ENCODE measurements at regions of chr6 and their contacts with region 1.

Region 1: GRCh38 chr6:63764318-63764916 is 128.8 kb downstream of the PHF3 start:
- DNase-seq: no peak
- H3K4me3 ChIP-seq: no peak overlapping the region
- H3K27ac ChIP-seq: no peak overlapping the region
- H3K4me1 ChIP-seq: no peaks in the 10 kb centered on the region
- H3K27me3 ChIP-seq: no peaks in the 10 kb centered on the region
- CTCF ChIP-seq: peak; percentile 11 to 77 (median 58)
- POLR2A ChIP-seq: no peak

Region 2: DNA sequence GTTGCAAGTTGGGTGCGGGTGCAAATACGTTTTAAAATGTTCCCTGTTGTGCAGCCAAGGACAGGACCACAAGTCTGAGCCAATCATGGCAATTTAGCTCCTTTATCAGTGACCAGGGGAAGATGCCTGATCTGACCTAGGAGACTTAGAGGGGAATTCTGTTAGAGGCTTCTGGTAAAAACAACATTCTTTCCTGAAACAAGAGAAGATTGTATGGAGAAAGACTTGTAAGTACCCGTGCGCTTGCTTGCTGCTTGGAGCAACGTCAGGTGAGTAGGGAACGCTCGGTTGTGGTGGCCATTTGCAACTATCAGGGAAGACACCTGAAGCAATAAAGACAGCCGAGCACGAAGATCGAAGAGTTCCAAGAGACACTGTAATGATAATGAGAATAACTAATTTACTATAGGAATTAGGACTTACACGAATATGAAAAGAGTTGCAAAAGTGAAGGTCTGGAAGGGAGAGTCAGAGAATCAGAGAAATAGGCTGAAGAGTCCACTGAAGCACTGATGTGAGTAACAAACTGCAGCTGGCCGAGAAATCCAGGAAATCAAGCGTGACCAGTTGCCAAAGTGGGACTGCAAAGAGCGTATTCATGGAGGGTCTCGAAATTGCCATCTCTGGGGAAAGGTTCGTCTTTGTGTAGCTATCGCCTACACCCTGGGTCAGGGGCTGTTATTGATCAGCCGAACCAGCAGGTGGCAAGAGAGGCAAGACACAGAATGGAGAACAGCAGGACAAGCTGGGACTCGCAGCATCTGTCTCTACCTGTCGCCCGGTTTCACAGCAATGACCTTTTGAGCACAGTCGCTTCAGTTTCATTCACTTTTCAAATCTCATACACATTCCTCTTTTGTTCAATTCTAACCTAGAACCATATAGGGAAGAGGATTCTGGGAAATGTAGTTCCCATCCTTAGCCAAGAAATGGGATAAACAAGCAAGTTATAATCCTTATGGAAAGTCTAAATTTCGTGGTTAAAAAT is 166.1 kb before region 1 on chr6:
- intact Hi-C with region 1: loop called (anchors 2 kb)
- DNase-seq: peak; percentile 87
- H3K4me3 ChIP-seq: peak overlapping the region; percentile 17 to 69 (median 32)
- H3K27ac ChIP-seq: peak overlapping the region in 2 of 8 donors; percentile 6 to 24
- H3K4me1 ChIP-seq: peaks cover 0 to 18% (median 14%) of the 10 kb centered on the region in 6 donors
- H3K27me3 ChIP-seq: no peaks in the 10 kb centered on the region
- CTCF ChIP-seq: peak; percentile 62 to 89 (median 81)
- POLR2A ChIP-seq: no peak